IMR-90 (cell line): ENCODE measurements at regions of chr13 and their contacts with region 1.

Region 1: GRCh38 chr13:49840266-49840665 is 47.8 kb upstream of the KPNA3 start:
- DNase-seq: peak; percentile 14
- ATAC-seq: no peak
- H3K4me3 ChIP-seq: no peak overlapping the region
- H3K27ac ChIP-seq: no peak overlapping the region
- H3K4me1 ChIP-seq: peaks cover 14% of the 10 kb centered on the region
- H3K27me3 ChIP-seq: no peaks in the 10 kb centered on the region
- CTCF ChIP-seq: no peak
- POLR2A ChIP-seq: no peak
- RAD21 ChIP-seq: no peak

Region 2: DNA sequence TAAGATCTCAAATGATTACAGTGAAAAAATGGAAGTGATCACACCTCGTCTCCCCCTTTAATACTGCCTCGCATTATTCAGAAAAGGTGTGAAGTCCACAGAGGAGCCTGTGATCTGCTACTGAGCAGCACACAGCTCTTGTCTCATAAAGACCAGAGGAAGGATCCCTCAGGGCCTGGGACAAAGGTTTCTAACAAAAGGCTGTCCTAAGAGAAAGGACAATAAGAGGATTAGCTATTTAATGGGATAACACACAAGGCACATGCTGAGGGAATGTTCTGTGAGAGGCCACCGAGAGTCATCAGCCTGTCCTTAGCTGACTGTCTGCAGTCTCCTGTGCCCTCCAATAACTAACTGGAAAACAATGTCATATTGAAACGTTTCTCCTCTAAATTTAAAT is 175.7 kb before region 1 on chr13:
- CTCF ChIA-PET with region 1: no interaction called
- POLR2A ChIA-PET with region 1: no interaction called
- dilution Hi-C with region 1: no loop called
- in situ Hi-C with region 1: loop called (anchors 5 kb)
- intact Hi-C with region 1: no loop called
- DNase-seq: no peak
- ATAC-seq: no peak
- H3K4me3 ChIP-seq: no peak overlapping the region
- H3K27ac ChIP-seq: no peak overlapping the region
- H3K4me1 ChIP-seq: peaks cover 2% of the 10 kb centered on the region
- H3K27me3 ChIP-seq: no peaks in the 10 kb centered on the region
- CTCF ChIP-seq: no peak
- POLR2A ChIP-seq: no peak
- RAD21 ChIP-seq: no peak

Region 3: GRCh38 chr13:49690992-49691886 is 149.0 kb before region 1 on chr13 and contains the start of gene EBPL:
- CTCF ChIA-PET with region 1: no interaction called
- POLR2A ChIA-PET with region 1: no interaction called
- dilution Hi-C with region 1: no loop called
- in situ Hi-C with region 1: no loop called
- intact Hi-C with region 1: loop called (anchors 5 kb)
- DNase-seq: peak; percentile 86
- ATAC-seq: peak; percentile 99
- H3K4me3 ChIP-seq: peak within 1 kb of the TSS; percentile 56
- H3K27ac ChIP-seq: peak within 1 kb of the TSS; percentile 67
- H3K4me1 ChIP-seq: 0 out of 2 replicates have a peak, but pooled peaks cover 1% of the 10 kb centered on the region
- H3K27me3 ChIP-seq: no peaks in the 10 kb centered on the region
- CTCF ChIP-seq: no peak
- POLR2A ChIP-seq: no peak
- RAD21 ChIP-seq: no peak
- total RNA-seq, gene EBPL: 57.9 and 78.6 TPM in 2 replicates

Region 4: GRCh38 chr13:49792550-49793324 is 47.5 kb before region 1 on chr13 and contains the start of gene KPNA3:
- CTCF ChIA-PET with region 1: no interaction called
- POLR2A ChIA-PET with region 1: no interaction called
- dilution Hi-C with region 1: no loop called
- in situ Hi-C with region 1: no loop called
- intact Hi-C with region 1: loop called (anchors 2 kb)
- DNase-seq: peak; percentile 96
- ATAC-seq: peak; percentile 92
- H3K4me3 ChIP-seq: peak within 1 kb of the TSS; percentile 87
- H3K27ac ChIP-seq: peak within 1 kb of the TSS; percentile 99
- H3K4me1 ChIP-seq: peaks cover 2% of the 10 kb centered on the region
- H3K27me3 ChIP-seq: no peaks in the 10 kb centered on the region
- CTCF ChIP-seq: no peak
- POLR2A ChIP-seq: no peak
- RAD21 ChIP-seq: no peak
- total RNA-seq, gene KPNA3: 48.6 and 63.6 TPM in 2 replicates